ENCODE measurements at regions of chr7 and their contacts with region 1.

Region 1: DNA sequence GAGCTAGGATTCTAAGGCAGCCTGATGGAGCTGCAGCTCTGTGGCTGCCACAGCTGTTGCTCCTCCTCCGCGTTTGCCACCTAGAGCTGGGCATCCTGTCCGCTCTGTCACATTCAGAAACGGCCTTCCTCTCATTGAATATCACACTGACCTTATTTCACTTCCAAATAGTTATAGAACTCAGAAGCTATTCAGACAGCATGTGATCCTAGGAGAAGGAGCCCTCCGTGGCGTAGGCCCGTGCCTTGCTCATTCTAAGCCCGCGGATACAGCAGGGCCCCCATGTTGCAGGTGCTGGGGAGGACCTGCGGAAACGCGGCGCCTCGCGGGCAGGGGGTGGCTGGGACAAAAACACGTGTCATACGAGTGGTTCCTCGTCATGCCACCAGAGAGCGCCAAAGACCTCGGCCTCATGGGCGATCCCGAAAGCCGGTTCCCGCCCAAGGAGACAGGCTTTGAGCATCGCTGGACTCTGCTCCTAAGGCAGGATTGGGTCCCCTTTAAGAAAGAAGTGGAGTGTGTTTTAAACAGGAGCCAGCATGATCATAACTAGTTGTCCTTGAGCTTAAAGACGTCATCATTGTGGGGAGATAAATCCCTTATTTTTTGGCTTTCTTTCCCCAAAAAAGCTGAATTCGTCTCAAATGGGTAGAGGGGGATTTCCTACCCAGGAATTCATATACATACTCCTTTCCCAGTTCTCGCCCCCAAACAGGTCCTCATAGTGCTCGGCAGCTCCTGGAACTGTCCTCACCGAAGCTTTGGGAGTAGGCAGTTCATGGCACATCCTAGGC is 17.9 kb upstream of the FIGNL1 start:
- DNase-seq: peak; percentile 72 to 82
- ATAC-seq: peak; percentile 87
- H3K4me3 ChIP-seq: peak overlapping the region; percentile 21 to 57 (median 35)
- H3K27ac ChIP-seq: peak overlapping the region; percentile 71 to 81 (median 74)
- H3K4me1 ChIP-seq: peaks cover 5 to 8% of the 10 kb centered on the region in 2 donors
- H3K27me3 ChIP-seq: no peaks in the 10 kb centered on the region
- CTCF ChIP-seq: peak; percentile 93 to 95 (median 94)
- POLR2A ChIP-seq: no peak

Region 2: GRCh38 chr7:50507898-50508470 is 40.0 kb after region 1 on chr7:
- in situ Hi-C with region 1: no loop called
- intact Hi-C with region 1: loop called (anchors 1 kb)
- DNase-seq: peak; percentile 80 to 93
- ATAC-seq: peak; percentile 78 to 84
- H3K4me3 ChIP-seq: peak overlapping the region in 1 of 4 donors; percentile 6
- H3K27ac ChIP-seq: peak overlapping the region; percentile 90 to 99 (median 97)
- H3K4me1 ChIP-seq: peaks cover 57 to 61% of the 10 kb centered on the region in 2 donors
- H3K27me3 ChIP-seq: no peaks in the 10 kb centered on the region
- CTCF ChIP-seq: no peak
- POLR2A ChIP-seq: peak; percentile 34 to 79

Region 3: GRCh38 chr7:50632561-50633413 is 164.8 kb after region 1 on chr7:
- in situ Hi-C with region 1: no loop called
- intact Hi-C with region 1: loop called (anchors 2 kb)
- DNase-seq: peak in 1 of 2 donors; percentile 68
- ATAC-seq: peak in 1 of 2 donors; percentile 50
- H3K4me3 ChIP-seq: no peak overlapping the region
- H3K27ac ChIP-seq: peak overlapping the region; percentile 77 to 93 (median 82)
- H3K4me1 ChIP-seq: peaks cover 60 to 79% of the 10 kb centered on the region in 2 donors
- H3K27me3 ChIP-seq: no peaks in the 10 kb centered on the region
- CTCF ChIP-seq: peak; percentile 75 to 91 (median 81)
- POLR2A ChIP-seq: no peak

Region 4: DNA sequence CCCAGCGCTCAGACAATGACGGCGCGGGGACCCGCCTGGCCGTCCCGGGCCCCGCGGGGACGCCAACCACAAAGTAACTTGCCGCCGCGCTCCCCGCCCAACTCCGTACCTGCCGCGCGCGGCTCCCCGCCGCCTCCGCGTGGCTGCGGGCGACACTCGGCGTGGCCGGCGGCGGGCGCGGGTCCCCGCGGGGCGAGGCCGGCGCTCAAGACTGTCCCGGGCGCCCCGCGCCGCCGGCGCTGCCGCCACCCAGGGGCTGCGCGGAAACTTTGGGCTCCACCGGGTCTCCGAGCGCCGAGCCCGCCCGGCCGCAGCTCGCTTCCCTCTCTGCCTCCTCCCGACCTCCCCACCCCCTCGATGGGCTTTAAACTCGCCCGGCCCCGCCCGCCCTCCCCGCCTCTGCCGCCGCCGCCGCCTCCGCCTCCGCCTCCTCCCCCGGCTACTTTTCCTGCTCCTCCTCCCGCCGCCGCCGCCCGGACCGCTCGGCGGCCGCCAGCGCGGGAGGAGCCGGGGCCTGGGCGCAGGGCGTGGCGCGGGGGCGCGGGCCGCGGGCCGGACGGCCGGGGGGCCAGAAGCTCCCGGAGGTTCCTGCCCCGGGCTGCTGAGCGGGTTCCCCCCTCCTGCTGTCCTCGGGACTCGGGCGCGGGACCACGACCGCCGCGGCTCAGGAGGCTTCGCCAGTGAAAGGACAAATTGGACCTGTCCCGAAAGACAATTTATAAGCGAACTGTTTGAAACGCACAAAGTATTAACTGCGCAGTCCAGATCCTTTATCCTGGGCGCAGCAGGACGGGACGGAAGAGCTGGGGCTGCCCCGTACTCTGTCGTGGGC is 325.3 kb after region 1 on chr7:
- in situ Hi-C with region 1: loop called in 2 of 4 experiments (anchors 25 kb)
- intact Hi-C with region 1: loop called (anchors 10 kb)
- DNase-seq: peak; percentile 54 to 63
- ATAC-seq: peak; percentile 70 to 74
- H3K4me3 ChIP-seq: peak overlapping the region; percentile 58 to 73 (median 60)
- H3K27ac ChIP-seq: peak overlapping the region; percentile 62 to 86 (median 81)
- H3K4me1 ChIP-seq: peaks cover 21 to 28% of the 10 kb centered on the region in 2 donors
- H3K27me3 ChIP-seq: no peaks in the 10 kb centered on the region
- CTCF ChIP-seq: no peak
- POLR2A ChIP-seq: peak; percentile 68 to 73

Region 5: GRCh38 chr7:51141451-51142003 is 673.5 kb after region 1 on chr7:
- in situ Hi-C with region 1: loop called in 1 of 4 experiments (anchors 10 kb)
- intact Hi-C with region 1: no loop called
- DNase-seq: no peak
- ATAC-seq: peak; percentile 43 to 66
- H3K4me3 ChIP-seq: no peak overlapping the region
- H3K27ac ChIP-seq: peak overlapping the region in 3 of 4 donors; percentile 13 to 49 (median 36)
- H3K4me1 ChIP-seq: peaks cover 5 to 25% of the 10 kb centered on the region in 2 donors
- H3K27me3 ChIP-seq: no peaks in the 10 kb centered on the region
- CTCF ChIP-seq: peak in 2 of 5 experiments; percentile 53 to 62
- POLR2A ChIP-seq: no peak

Region 6: DNA sequence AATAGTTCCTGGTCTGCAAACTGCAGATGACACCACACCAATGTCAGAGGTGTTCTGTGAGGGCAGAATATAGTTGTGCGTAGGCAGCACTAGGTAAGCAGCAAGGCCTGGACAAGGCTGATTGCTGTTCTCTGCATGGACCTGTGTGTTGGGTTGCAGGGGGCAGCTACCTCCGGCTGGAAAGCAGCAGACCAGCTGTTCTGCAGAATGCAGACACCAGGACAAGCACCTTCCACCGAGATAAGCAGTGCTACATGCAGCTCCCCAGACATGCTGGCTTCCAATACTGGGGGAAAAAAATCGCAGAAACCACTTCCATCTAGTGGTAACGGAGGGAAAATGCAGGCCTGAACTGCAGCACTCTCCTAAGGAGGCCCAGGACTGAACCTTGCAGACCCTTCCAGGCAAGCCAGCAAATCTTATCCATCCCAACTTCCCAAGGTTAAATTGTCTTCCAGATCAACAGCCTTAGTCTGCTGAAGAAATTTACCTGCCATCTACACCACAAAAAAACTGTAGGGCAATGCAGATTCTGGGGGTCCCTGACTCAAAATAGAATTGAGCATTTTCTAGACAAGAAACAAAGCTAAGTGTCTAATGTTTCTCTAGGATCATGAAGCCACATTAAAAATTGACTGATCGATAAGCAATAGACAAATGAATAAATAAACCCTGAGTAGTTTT is 899.1 kb after region 1 on chr7:
- in situ Hi-C with region 1: loop called in 1 of 4 experiments (anchors 25 kb)
- intact Hi-C with region 1: no loop called
- DNase-seq: peak; percentile 9 to 29
- ATAC-seq: peak; percentile 89 to 96
- H3K4me3 ChIP-seq: no peak overlapping the region
- H3K27ac ChIP-seq: no peak overlapping the region
- H3K4me1 ChIP-seq: no peaks in the 10 kb centered on the region
- H3K27me3 ChIP-seq: no peaks in the 10 kb centered on the region
- CTCF ChIP-seq: peak; percentile 64 to 80 (median 75)
- POLR2A ChIP-seq: no peak

Measured in gastrocnemius medialis (tissue), 4 donors.